HCT116 (cell line): ENCODE measurements at regions of chr11 and their contacts with region 1.

Region 1: GRCh38 chr11:118401151-118401878 is at the start of gene ATP5MG:
- DNase-seq: peak; percentile 81
- ATAC-seq: peak; percentile 80
- H3K4me3 ChIP-seq: peak within 1 kb of the TSS; percentile 64 to 87
- H3K27ac ChIP-seq: peak within 1 kb of the TSS; percentile 75
- H3K4me1 ChIP-seq: peaks cover 10 to 20% of the 10 kb centered on the region in 2 experiments; a peak in 3 of 4 replicates
- H3K27me3 ChIP-seq: no peaks in the 10 kb centered on the region
- CTCF ChIP-seq: no peak; a peak in 1 of 6 replicates
- POLR2A ChIP-seq: peak; percentile 84
- RAD21 ChIP-seq: peak; percentile 5; the same call in 1 of the 2 replicates
- total RNA-seq, gene ATP5MG: 205 TPM

Region 2: GRCh38 chr11:118435893-118436624 is 34.7 kb after region 1 on chr11 and contains the start of gene KMT2A:
- CTCF ChIA-PET with region 1: no interaction called
- POLR2A ChIA-PET with region 1: no interaction called
- RAD21 ChIA-PET with region 1: no interaction called
- intact Hi-C with region 1: loop called (anchors 1 kb)
- DNase-seq: peak; percentile 90
- ATAC-seq: peak; percentile 75
- H3K4me3 ChIP-seq: peak within 1 kb of the TSS; percentile 69 to 83
- H3K27ac ChIP-seq: peak within 1 kb of the TSS; percentile 89
- H3K4me1 ChIP-seq: peaks cover 16 to 27% of the 10 kb centered on the region in 2 experiments
- H3K27me3 ChIP-seq: no peaks in the 10 kb centered on the region
- CTCF ChIP-seq: no peak
- POLR2A ChIP-seq: peak; percentile 58
- RAD21 ChIP-seq: no peak
- total RNA-seq, gene KMT2A: 50.4 TPM

Region 3: DNA sequence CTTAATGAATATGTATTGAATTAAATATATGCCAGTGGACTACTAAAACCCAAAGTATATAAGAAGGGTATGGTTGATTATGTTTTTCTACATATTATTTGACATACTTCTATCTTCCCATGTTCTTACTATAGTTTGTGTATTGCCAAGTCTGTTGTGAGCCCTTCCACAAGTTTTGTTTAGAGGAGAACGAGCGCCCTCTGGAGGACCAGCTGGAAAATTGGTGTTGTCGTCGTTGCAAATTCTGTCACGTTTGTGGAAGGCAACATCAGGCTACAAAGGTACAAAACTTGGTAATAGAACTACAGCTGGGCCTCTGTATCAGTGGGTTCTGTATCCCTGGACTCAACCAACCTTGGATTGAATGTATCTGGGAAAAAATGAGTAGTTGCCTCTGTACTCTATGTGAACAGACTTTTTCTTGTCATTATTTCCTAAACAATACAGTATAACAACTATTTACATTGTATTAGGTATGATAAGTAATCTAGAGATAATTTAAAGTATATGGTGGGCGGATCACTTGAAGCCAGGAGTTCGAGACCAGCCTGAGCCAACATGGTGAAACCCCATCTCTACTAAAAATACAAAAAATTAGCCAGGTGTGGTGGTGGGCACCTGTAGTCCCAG is 87.3 kb after region 1 on chr11:
- CTCF ChIA-PET with region 1: no interaction called
- POLR2A ChIA-PET with region 1: no interaction called
- RAD21 ChIA-PET with region 1: no interaction called
- intact Hi-C with region 1: loop called (anchors 1 kb)
- DNase-seq: peak; percentile 59
- ATAC-seq: peak; percentile 81
- H3K4me3 ChIP-seq: no peak overlapping the region
- H3K27ac ChIP-seq: no peak overlapping the region
- H3K4me1 ChIP-seq: no peaks in the 10 kb centered on the region
- H3K27me3 ChIP-seq: no peaks in the 10 kb centered on the region
- CTCF ChIP-seq: peak; percentile 79 to 91 (median 83)
- POLR2A ChIP-seq: no peak
- RAD21 ChIP-seq: peak; percentile 91